Mammary epithelial cell (primary cell): ENCODE measurements at regions of chr18 and their contacts with region 1.

Region 1: GRCh38 chr18:26656944-26657536 is 108.7 kb upstream of the KCTD1 start:
- DNase-seq: peak; percentile 73
- H3K4me3 ChIP-seq: peak overlapping the region; percentile 56 to 79 (median 69)
- H3K27ac ChIP-seq: peak overlapping the region; percentile 11
- H3K4me1 ChIP-seq: peaks cover 16% of the 10 kb centered on the region
- H3K27me3 ChIP-seq: peaks cover 28% of the 10 kb centered on the region
- CTCF ChIP-seq: peak in 1 of 2 donors; percentile 39

Region 2: GRCh38 chr18:26258711-26259110 is 398.3 kb before region 1 on chr18:
- CTCF ChIA-PET with region 1: interaction called, 17 read pairs
- dilution Hi-C with region 1: no loop called
- in situ Hi-C with region 1: no loop called
- intact Hi-C with region 1: no loop called
- DNase-seq: no peak
- H3K4me3 ChIP-seq: no peak overlapping the region
- H3K27ac ChIP-seq: no peak overlapping the region
- H3K4me1 ChIP-seq: no peaks in the 10 kb centered on the region
- H3K27me3 ChIP-seq: no peaks in the 10 kb centered on the region
- CTCF ChIP-seq: no peak

Region 3: DNA sequence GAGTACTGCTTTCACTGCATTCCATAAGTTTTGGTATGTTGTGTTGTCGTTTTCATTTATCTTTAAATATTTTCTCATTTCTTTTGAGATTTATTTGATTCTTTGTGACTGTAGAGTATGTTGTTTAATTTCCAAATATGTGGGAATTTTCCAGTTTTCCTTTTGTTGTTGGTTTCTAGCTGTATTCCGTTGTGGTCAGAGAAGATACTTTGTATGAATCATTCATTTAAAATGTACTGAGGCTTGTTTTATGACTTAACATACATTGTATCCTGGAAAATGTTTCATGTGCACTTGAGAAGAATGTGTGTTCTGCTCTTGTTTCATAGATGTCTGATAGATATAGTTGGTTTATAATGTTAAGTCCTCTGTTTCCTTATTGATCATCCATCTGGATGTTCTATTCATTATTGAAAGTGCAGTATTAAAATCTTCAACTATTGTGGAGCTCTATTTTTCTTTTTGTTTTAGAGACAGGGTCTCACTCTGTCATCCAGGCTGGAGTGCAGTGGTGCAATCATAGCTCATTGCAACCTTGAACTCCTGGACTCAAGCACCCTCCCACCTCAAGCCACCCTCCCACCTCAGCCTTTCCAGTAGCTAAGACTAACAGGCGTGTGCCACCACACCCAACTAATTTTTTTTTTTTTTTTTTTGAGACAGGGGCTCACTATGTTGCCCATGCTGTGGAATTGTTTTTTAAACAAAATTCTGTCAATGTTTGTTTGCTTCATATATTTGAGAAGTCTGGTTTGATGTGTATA is 334.0 kb before region 1 on chr18:
- CTCF ChIA-PET with region 1: no interaction called
- dilution Hi-C with region 1: no loop called
- in situ Hi-C with region 1: no loop called
- intact Hi-C with region 1: loop called (anchors 5 kb)
- DNase-seq: peak; percentile 63
- H3K4me3 ChIP-seq: no peak overlapping the region
- H3K27ac ChIP-seq: peak overlapping the region; percentile 50
- H3K4me1 ChIP-seq: peaks cover 23% of the 10 kb centered on the region
- H3K27me3 ChIP-seq: no peaks in the 10 kb centered on the region
- CTCF ChIP-seq: no peak

Region 4: GRCh38 chr18:26383454-26384270 is 273.4 kb before region 1 on chr18:
- CTCF ChIA-PET with region 1: interaction called, 4 read pairs
- dilution Hi-C with region 1: no loop called
- in situ Hi-C with region 1: loop called in 1 of 2 experiments (anchors 10 kb)
- intact Hi-C with region 1: no loop called
- DNase-seq: peak; percentile 33
- H3K4me3 ChIP-seq: no peak overlapping the region
- H3K27ac ChIP-seq: no peak overlapping the region
- H3K4me1 ChIP-seq: peaks cover 14% of the 10 kb centered on the region
- H3K27me3 ChIP-seq: no peaks in the 10 kb centered on the region
- CTCF ChIP-seq: peak; percentile 70 to 71

Region 5: DNA sequence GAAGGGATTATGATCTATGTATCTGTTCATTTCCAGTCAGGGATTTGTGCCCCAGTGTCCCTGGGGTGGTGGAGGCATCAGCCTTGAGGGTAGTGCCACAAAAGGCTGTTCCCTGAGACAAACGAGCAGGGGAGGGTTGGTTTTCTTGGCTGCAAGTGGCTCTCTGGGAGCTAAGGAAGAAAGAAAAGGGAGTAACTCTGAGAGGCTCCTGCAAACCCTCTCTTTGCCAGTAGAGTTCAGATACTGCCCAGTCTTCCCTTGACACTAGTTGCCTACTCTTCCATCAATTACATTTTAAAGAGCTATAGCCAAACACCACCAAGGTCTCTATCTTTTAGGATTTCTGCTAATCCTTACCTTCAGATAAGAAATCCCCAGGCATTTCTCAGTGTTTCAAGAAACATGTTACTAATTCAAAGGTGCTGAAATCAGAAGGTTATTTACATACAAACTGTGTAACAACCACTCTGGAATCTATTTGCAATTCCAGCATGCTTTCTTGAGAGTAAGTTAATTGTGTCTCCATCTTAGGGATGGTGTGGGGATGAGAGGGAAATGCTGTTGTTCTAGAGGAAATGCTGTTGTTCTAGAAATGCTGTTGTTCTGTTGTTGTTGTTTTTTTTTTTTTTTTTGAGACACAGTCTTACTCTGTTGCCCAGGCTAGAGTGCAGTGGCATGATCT is 90.0 kb before region 1 on chr18:
- CTCF ChIA-PET with region 1: no interaction called
- dilution Hi-C with region 1: no loop called
- in situ Hi-C with region 1: no loop called
- intact Hi-C with region 1: no loop called
- DNase-seq: no peak
- H3K4me3 ChIP-seq: no peak overlapping the region
- H3K27ac ChIP-seq: no peak overlapping the region
- H3K4me1 ChIP-seq: no peaks in the 10 kb centered on the region
- H3K27me3 ChIP-seq: no peaks in the 10 kb centered on the region
- CTCF ChIP-seq: peak in 1 of 2 donors; percentile 18

Region 6: DNA sequence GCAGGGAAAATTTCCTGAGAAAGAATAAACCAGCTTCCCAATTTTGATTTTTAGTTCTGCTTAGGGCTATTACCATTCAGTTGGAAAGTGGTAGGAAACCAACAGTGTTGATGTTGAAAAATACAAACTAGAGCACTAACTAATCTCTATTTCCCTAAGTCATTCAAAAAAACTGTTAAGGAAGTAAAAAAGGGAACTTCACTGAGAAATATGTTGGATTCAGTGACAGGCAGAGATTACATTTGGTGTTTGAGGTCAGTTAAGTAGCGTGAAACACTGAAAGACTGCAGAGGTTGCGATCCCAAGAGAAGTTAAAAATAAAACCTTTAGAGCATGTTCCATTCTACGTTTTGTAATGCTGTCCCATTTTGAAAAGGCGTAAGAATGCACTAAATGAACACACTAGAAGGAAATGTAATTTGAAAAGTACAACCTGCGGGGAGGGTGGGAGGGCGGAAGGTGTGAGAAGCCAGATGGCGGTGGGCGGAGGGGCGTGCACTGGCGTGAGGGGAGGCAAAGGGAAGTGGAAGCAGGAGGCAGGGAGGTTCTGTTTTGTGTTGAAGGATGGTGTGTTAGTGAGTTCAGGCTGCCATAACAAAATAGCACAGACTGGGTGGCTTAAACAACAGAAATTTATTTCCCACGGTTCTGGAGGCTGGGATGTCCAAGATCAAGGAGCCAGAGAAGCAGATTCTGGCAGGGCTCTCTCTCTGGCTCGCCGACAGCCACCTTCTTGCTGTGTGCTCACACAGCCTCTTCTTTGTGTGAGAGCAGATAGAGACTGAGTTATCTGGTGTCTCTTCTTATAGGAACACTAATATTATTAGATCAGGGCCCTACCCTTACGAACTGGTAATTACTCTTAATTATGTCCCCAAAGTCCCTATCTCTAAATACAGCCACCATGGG is 14.3 kb before region 1 on chr18:
- CTCF ChIA-PET with region 1: no interaction called
- dilution Hi-C with region 1: no loop called
- in situ Hi-C with region 1: no loop called
- intact Hi-C with region 1: no loop called
- DNase-seq: no peak
- H3K4me3 ChIP-seq: no peak overlapping the region
- H3K27ac ChIP-seq: no peak overlapping the region
- H3K4me1 ChIP-seq: no peaks in the 10 kb centered on the region
- H3K27me3 ChIP-seq: no peaks in the 10 kb centered on the region
- CTCF ChIP-seq: no peak

Region 7: DNA sequence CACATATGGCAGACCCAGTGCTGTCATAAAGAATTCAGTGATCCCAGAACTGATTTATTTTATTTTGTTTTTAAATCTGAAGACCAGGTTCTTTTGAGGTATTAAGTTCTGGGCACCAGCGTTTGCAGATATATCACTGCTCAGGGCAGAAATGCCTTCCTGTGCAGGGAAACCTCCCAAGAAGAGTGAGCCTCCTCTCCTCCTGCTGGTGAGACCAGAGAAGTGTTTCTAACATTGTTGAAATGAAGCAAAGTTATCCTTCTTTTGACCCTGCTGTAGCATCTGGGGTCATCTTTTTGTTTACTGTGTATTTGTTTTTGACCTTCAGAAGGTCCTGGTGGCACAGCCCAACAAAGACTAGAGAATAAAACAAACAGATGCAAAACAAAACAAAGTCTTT is 114.5 kb after region 1 on chr18:
- CTCF ChIA-PET with region 1: no interaction called
- dilution Hi-C with region 1: no loop called
- in situ Hi-C with region 1: no loop called
- intact Hi-C with region 1: loop called (anchors 2 kb)
- DNase-seq: no peak
- H3K4me3 ChIP-seq: no peak overlapping the region
- H3K27ac ChIP-seq: no peak overlapping the region
- H3K4me1 ChIP-seq: no peaks in the 10 kb centered on the region
- H3K27me3 ChIP-seq: peaks cover 5% of the 10 kb centered on the region
- CTCF ChIP-seq: peak; percentile 43 to 72

Region 8: DNA sequence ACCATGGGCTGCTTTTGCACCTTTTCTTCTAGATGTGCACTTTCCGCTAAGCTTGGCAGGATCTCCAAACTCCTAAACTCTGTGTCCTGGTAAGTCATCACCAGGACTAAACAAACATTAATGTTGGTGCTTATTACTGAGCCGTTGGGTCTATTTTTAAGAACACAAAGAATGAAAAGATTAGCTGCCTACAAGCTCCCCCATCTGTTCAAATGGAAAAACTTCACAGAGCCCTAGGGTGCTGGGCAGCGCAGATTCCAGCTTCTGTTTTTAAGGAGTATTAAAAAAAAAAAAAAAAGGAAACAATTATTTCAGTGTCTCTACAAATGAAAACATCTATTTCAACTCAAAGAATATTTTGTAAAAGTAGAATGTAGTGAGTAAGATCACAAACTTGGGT is 306.3 kb after region 1 on chr18:
- CTCF ChIA-PET with region 1: no interaction called
- dilution Hi-C with region 1: no loop called
- in situ Hi-C with region 1: no loop called
- intact Hi-C with region 1: loop called (anchors 5 kb)
- DNase-seq: peak; percentile 28
- H3K4me3 ChIP-seq: no peak overlapping the region
- H3K27ac ChIP-seq: no peak overlapping the region
- H3K4me1 ChIP-seq: no peaks in the 10 kb centered on the region
- H3K27me3 ChIP-seq: no peaks in the 10 kb centered on the region
- CTCF ChIP-seq: peak in 1 of 2 donors; percentile 38

Region 9: DNA sequence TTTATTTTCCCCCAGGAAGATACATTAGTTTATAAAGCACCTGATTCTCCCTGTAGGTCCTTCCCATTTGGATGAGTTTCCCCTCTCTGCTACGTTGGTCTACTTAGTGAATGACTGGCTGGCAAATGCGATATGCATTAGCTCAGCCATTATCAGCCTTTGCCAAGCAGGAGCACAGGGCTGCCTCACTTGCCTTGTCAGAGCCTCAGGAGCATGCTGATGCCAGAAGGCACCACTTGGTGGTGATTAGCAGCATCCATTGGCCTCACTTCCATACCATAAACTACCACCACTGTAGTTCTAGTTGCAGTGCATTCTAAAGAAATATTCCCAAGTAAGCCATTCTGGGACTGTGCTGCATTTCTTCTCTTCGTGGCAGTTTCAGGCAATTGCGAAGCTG is 970.9 kb after region 1 on chr18:
- CTCF ChIA-PET with region 1: no interaction called
- dilution Hi-C with region 1: no loop called
- in situ Hi-C with region 1: no loop called
- intact Hi-C with region 1: no loop called
- DNase-seq: no peak
- H3K4me3 ChIP-seq: no peak overlapping the region
- H3K27ac ChIP-seq: no peak overlapping the region
- H3K4me1 ChIP-seq: no peaks in the 10 kb centered on the region
- H3K27me3 ChIP-seq: peaks cover 2% of the 10 kb centered on the region
- CTCF ChIP-seq: no peak